PC-3 (cell line): ENCODE measurements at regions of chr19 and their contacts with region 1.

Region 1: GRCh38 chr19:10206226-10206885 is 11.6 kb upstream of the DNMT1 start:
- DNase-seq: peak; percentile 51
- ATAC-seq: peak; percentile 72
- H3K4me3 ChIP-seq: no peak overlapping the region
- H3K27ac ChIP-seq: no peak overlapping the region
- H3K4me1 ChIP-seq: peaks cover 21% of the 10 kb centered on the region
- H3K27me3 ChIP-seq: no peaks in the 10 kb centered on the region
- CTCF ChIP-seq: no peak

Region 2: GRCh38 chr19:8821748-8822241 is 1384.6 kb before region 1 on chr19:
- CTCF ChIA-PET with region 1: no interaction called
- POLR2A ChIA-PET with region 1: interaction called, 17 read pairs
- intact Hi-C with region 1: no loop called
- DNase-seq: no peak
- ATAC-seq: no peak
- H3K4me3 ChIP-seq: no peak overlapping the region
- H3K27ac ChIP-seq: no peak overlapping the region
- H3K4me1 ChIP-seq: no peaks in the 10 kb centered on the region
- H3K27me3 ChIP-seq: no peaks in the 10 kb centered on the region
- CTCF ChIP-seq: no peak

Region 3: DNA sequence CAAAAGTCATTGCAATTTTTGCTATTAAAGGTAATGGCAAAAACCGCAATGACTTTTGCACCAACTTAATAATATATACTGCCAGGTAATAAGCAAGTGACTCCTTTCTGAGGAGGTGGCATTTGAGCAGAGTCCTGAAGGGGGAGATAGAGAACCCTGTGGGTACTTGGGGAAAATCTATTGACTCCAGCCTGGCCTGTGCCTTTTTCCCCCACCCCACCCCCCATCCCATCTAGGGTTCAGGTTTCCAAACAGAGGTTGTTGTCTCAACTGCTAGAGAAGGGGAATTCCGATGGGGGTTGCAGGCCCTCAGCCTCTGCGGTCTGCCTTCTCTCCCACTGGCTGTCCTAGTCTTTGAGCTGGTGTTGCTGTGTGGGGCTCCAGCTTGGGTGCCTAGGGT is 13.3 kb after region 1 on chr19:
- CTCF ChIA-PET with region 1: interaction called, 11 read pairs
- POLR2A ChIA-PET with region 1: no interaction called
- intact Hi-C with region 1: no loop called
- DNase-seq: peak; percentile 74
- ATAC-seq: peak; percentile 56
- H3K4me3 ChIP-seq: no peak overlapping the region
- H3K27ac ChIP-seq: no peak overlapping the region
- H3K4me1 ChIP-seq: no peaks in the 10 kb centered on the region
- H3K27me3 ChIP-seq: no peaks in the 10 kb centered on the region
- CTCF ChIP-seq: peak; percentile 59